ENCODE measurements at regions of chr5 and their contacts with region 1.

Region 1: DNA sequence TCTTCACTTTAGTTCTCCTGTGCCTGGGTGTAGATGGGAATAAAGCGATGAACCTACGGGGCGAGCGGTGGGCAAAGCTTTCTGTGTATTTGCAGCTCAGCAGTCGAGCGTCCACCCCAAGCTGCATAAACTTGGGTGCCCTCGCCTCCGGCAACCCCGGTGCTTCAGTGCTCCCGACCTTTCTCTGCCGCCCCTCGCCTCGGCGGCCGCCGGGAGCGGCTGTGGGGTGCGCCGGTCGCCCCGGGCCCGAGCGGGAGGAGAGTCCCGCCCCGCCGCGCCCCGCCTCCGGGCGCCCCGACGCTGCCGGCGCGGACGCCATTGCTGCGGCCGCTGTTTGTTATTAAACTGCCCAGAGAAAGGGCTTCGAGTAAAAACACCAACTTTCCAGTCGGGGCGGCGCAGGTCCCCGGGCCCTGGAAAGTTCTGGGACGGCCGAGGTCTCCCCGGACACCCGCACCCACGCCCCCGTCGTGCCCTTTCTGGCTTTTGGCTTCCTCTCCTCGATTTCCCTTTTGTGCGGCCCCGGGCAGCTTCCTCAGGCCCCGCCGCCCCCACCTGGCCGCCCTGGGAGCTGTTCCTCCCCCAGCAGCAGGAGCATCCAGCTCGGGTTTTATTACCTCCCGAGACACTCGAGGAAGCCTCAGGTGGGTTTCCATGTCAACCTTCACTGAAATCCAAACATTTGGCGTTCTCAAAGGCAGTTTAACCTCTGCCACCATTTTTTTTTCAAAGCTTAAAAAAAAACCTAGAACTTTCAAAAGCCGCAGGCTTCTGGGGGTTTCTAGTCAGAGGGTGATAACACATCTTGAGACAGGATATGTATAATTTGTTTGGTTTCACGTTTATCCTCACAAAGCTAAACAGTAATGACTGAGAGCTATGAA is 334.3 kb downstream of the CWC27 start:
- DNase-seq: peak; percentile 21
- H3K4me3 Mint-ChIP-seq: peak overlapping the region; percentile 80
- H3K27ac Mint-ChIP-seq: peak overlapping the region; percentile 73
- H3K4me1 Mint-ChIP-seq: peaks cover 35% of the 10 kb centered on the region
- H3K27me3 Mint-ChIP-seq: peaks cover 21% of the 10 kb centered on the region

Region 2: GRCh38 chr5:64811050-64811640 is 291.9 kb before region 1 on chr5:
- intact Hi-C with region 1: loop called (anchors 10 kb)
- DNase-seq: no peak
- H3K4me3 Mint-ChIP-seq: no peak overlapping the region
- H3K27ac Mint-ChIP-seq: no peak overlapping the region
- H3K4me1 Mint-ChIP-seq: peaks cover 7% of the 10 kb centered on the region
- H3K27me3 Mint-ChIP-seq: no peaks in the 10 kb centered on the region

Region 3: GRCh38 chr5:65035211-65036206 is 67.6 kb before region 1 on chr5:
- intact Hi-C with region 1: loop called (anchors 1 kb)
- DNase-seq: peak; percentile 79
- H3K4me3 Mint-ChIP-seq: peak overlapping the region; percentile 78
- H3K27ac Mint-ChIP-seq: peak overlapping the region; percentile 83
- H3K4me1 Mint-ChIP-seq: peaks cover 34% of the 10 kb centered on the region
- H3K27me3 Mint-ChIP-seq: no peaks in the 10 kb centered on the region

Region 4: DNA sequence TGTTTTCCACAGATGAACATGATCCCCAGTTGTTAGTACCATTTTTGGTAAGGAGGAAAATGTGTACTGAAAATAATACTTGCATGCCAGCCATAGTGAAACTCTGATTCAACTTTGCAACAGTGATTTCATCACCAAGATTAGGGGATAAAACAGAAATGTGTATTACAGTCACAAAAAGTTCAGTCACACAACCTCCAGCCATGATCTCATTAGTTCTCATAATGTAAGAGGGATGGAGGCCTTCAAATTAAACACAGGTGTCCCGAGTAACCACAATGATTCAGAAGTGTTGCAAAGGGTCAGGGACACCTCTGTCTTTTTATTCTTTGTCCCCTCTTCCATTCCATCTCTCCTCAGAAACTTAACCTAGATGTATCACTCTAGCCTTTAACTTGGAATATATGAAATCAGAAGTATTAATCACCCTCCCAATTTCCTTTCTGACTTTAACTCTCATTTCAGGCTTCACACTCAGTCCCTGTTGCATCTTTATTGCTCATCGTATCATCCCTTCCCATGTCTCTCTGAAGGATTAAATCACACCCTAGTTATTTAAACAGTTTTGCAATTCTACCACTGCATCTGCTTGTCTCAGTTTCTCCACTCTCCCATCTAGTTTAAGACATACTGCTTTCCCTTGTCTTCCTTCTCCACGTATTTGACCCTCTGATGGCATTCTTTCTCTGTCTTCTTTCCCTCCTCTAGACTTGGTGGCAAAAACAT is 87.4 kb after region 1 on chr5:
- intact Hi-C with region 1: loop called (anchors 5 kb)
- DNase-seq: no peak
- H3K4me3 Mint-ChIP-seq: no peak overlapping the region
- H3K27ac Mint-ChIP-seq: peak overlapping the region; percentile 23
- H3K4me1 Mint-ChIP-seq: peaks cover 8% of the 10 kb centered on the region
- H3K27me3 Mint-ChIP-seq: peaks cover 10% of the 10 kb centered on the region

Region 5: GRCh38 chr5:65914641-65915196 is 811.6 kb after region 1 on chr5:
- intact Hi-C with region 1: no loop called
- DNase-seq: no peak
- H3K4me3 Mint-ChIP-seq: no peak overlapping the region
- H3K27ac Mint-ChIP-seq: no peak overlapping the region
- H3K4me1 Mint-ChIP-seq: no peaks in the 10 kb centered on the region
- H3K27me3 Mint-ChIP-seq: peaks cover 12% of the 10 kb centered on the region

Measured in activated T-helper 2 cell treated with anti-CD3 and anti-CD28 coated beads, Interferon-gamma antibody, Interleukin-2, Interleukin-4, amounts not matched to agents 10 μg/mL and 5 μg/mL and 100 μg/mL, durations not matched to agents 14 hours and 24 hours and 36 hours (primary cell).